ENCODE measurements at regions of chr12 and their contacts with region 1.

Region 1: GRCh38 chr12:93682846-93683261 is 5.7 kb downstream of the CRADD start:
- DNase-seq: peak in 1 of 2 donors; percentile 29
- ATAC-seq: peak; percentile 24 to 27
- H3K4me3 ChIP-seq: peak overlapping the region in 2 of 4 donors; percentile 8 to 34
- H3K27ac ChIP-seq: peak overlapping the region; percentile 66 to 80 (median 70)
- H3K4me1 ChIP-seq: peaks cover 70 to 73% of the 10 kb centered on the region in 2 donors
- H3K27me3 ChIP-seq: no peaks in the 10 kb centered on the region
- CTCF ChIP-seq: no peak
- POLR2A ChIP-seq: no peak

Region 2: GRCh38 chr12:93727195-93727811 is 44.4 kb after region 1 on chr12:
- in situ Hi-C with region 1: loop called in 1 of 4 experiments (anchors 10 kb)
- intact Hi-C with region 1: loop called (anchors 5 kb)
- DNase-seq: peak; percentile 48 to 74
- ATAC-seq: peak; percentile 84 to 89
- H3K4me3 ChIP-seq: peak overlapping the region in 1 of 4 donors; percentile 24
- H3K27ac ChIP-seq: peak overlapping the region; percentile 72 to 83 (median 77)
- H3K4me1 ChIP-seq: peaks cover 27 to 36% of the 10 kb centered on the region in 2 donors
- H3K27me3 ChIP-seq: no peaks in the 10 kb centered on the region
- CTCF ChIP-seq: peak in 2 of 5 experiments; percentile 15 to 26
- POLR2A ChIP-seq: no peak

Region 3: GRCh38 chr12:93733358-93733757 is 50.5 kb after region 1 on chr12:
- in situ Hi-C with region 1: loop called in 1 of 4 experiments (anchors 10 kb)
- intact Hi-C with region 1: loop called (anchors 5 kb)
- DNase-seq: no peak
- ATAC-seq: no peak
- H3K4me3 ChIP-seq: no peak overlapping the region
- H3K27ac ChIP-seq: no peak overlapping the region
- H3K4me1 ChIP-seq: peaks cover 20 to 25% of the 10 kb centered on the region in 2 donors
- H3K27me3 ChIP-seq: no peaks in the 10 kb centered on the region
- CTCF ChIP-seq: no peak
- POLR2A ChIP-seq: no peak

Region 4: DNA sequence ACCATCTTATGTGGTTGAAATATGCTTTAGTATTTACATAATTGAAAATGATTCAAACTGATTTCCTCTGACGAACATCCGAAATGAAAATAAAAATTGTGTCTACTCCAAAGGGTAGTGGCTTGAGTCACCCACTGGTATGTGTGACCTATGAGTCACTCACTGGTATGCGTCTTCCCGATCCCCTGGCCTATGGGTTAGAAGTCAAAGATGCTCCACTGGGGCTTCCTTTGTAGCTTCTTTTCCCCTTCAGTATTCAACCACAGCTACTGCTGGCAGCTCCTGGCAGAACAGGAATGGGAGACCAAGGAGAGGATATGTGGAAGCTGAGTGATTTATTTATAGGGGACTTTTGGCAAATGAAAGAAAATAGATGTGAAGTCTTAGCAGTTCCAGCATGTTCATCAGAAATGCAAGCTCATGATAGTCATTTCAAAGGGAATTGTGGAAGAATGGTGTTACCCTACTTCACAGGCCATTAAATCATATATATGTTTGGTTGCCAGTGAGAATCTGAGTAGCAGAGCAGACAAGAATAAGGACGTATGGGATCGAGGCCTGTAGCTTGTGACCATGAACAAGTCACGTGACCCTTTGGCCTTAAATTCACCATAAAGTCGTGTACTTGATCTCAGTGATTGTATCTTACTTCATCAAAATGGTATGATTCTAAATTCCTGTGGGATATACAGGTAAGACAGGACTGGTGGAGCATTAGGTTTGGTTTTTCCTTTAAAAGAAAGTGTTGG is 102.6 kb after region 1 on chr12:
- in situ Hi-C with region 1: no loop called
- intact Hi-C with region 1: no loop called
- DNase-seq: peak; percentile 48 to 74
- ATAC-seq: peak; percentile 74 to 86
- H3K4me3 ChIP-seq: peak overlapping the region; percentile 15 to 35 (median 24)
- H3K27ac ChIP-seq: peak overlapping the region; percentile 82 to 93 (median 87)
- H3K4me1 ChIP-seq: peaks cover 38 to 45% of the 10 kb centered on the region in 2 donors
- H3K27me3 ChIP-seq: no peaks in the 10 kb centered on the region
- CTCF ChIP-seq: no peak
- POLR2A ChIP-seq: no peak

Region 5: DNA sequence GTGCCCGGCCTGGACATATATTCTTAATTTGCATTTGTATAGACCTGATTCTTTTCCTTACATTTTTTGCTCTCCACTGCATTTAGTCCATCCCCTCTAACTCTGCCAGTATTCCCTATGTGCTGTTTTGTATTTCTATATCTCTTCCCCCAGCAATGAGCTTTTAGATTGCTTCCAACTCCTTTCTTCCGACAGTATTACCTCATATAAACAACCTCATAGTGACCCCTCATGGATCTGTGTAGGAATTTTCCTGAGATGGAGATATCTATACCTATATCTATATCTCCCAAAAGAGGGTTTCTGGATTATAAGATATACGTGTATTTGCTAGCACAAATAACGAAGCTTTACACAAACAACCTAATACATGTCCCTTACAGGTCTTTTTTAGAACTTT is 156.2 kb after region 1 on chr12:
- in situ Hi-C with region 1: no loop called
- intact Hi-C with region 1: no loop called
- DNase-seq: no peak
- ATAC-seq: no peak
- H3K4me3 ChIP-seq: no peak overlapping the region
- H3K27ac ChIP-seq: no peak overlapping the region
- H3K4me1 ChIP-seq: peaks cover 11 to 33% of the 10 kb centered on the region in 2 donors
- H3K27me3 ChIP-seq: no peaks in the 10 kb centered on the region
- CTCF ChIP-seq: no peak
- POLR2A ChIP-seq: no peak

Region 6: GRCh38 chr12:93857279-93857938 is 174.6 kb after region 1 on chr12:
- in situ Hi-C with region 1: no loop called
- intact Hi-C with region 1: no loop called
- DNase-seq: no peak
- ATAC-seq: no peak
- H3K4me3 ChIP-seq: no peak overlapping the region
- H3K27ac ChIP-seq: no peak overlapping the region
- H3K4me1 ChIP-seq: peaks cover 0 to 6% of the 10 kb centered on the region in 2 donors
- H3K27me3 ChIP-seq: no peaks in the 10 kb centered on the region
- CTCF ChIP-seq: no peak
- POLR2A ChIP-seq: no peak

Region 7: GRCh38 chr12:93943766-93944165 is 260.9 kb after region 1 on chr12:
- in situ Hi-C with region 1: no loop called
- intact Hi-C with region 1: loop called (anchors 5 kb)
- DNase-seq: peak; percentile 75 to 87
- ATAC-seq: peak; percentile 99 to 100
- H3K4me3 ChIP-seq: no peak overlapping the region
- H3K27ac ChIP-seq: peak overlapping the region; percentile 63 to 81 (median 72)
- H3K4me1 ChIP-seq: peaks cover 6 to 9% of the 10 kb centered on the region in 2 donors
- H3K27me3 ChIP-seq: no peaks in the 10 kb centered on the region
- CTCF ChIP-seq: peak; percentile 34 to 49 (median 42)
- POLR2A ChIP-seq: peak in 1 of 2 donors; percentile 41